Cardiac septum (tissue), 1 donor: ENCODE measurements at regions of chr3 and their contacts with region 1.

Region 1: DNA sequence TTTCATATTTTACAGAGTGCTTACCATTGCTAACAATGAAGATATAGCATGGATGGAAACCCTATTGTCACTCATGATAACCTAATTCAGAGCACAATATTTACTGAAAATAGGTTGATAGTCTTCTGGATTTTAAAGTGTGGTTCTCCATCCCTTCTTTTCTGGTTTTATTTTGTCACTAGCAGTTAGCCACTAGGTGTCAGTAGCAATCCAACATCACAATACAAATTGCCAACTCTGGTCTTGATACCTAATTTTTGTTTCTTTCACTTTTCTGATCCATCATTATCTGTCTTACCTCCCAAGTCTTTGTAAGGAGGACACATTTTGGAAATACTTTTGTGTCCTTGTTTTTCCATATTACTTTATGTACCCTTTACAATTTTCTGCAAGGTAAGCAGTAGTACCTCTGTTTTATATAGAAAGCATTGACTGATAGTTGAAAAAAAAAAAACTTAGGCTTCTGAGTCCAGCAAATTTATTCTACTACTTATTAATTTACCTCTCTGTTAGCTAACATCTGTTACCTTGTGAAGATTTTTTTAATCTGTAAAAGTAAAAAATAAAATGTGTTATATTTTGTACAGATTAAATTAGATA is 28.3 kb upstream of the CRYBG3 start:
- DNase-seq: no peak

Region 2: GRCh38 chr3:96931119-96931862 is 862.2 kb before region 1 on chr3:
- intact Hi-C with region 1: no loop called
- DNase-seq: no peak

Region 3: GRCh38 chr3:97979610-97980009 is 186.1 kb after region 1 on chr3:
- intact Hi-C with region 1: loop called (anchors 5 kb)
- DNase-seq: no peak

Region 4: DNA sequence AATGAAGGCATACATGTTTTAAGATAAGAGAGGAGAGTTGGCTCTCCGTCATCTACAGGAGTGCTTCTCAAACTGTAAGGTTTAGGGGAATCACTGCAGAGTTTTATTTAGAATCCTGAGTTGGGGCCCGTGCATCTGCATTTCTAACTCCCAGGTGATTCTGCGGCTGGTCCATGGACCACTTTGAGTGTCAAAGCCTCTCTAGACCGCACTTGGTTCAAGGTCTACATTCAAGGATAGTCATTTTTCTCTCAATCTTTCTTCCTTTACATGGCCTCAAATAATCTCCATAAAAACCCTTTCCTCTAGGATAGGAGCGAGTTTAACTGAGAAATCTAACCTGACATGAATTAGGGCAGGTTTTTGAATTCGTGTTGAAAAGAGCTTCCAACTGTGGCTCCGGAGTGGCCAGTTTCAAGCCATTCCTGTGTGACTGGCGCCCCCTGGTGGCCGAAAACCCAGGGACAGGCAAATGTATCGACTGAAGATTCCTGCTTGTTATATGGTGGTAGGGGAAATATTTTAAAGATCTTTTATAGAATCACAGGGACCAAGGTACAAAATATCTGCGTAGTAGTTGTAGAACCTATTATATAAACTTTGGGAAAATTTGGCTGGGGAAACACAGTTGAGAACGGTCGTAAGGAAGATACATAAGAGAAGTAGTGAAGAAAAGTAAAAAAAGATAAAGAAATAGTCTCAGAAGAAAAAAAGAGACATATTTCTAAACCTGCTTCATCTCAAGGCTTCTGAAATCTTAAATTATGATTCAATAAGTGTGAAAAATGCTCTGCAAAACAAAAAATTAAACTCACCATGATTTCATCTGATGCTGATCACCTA is 229.7 kb after region 1 on chr3:
- intact Hi-C with region 1: loop called (anchors 1 kb)
- DNase-seq: peak; percentile 89